ENCODE measurements at regions of chr15 and their contacts with region 1.

Region 1: GRCh38 chr15:45529613-45530012 is 7.1 kb upstream of the SLC30A4 start:
- DNase-seq: no peak
- H3K4me3 ChIP-seq: no peak overlapping the region
- H3K27ac ChIP-seq: no peak overlapping the region
- H3K4me1 ChIP-seq: no peaks in the 10 kb centered on the region
- H3K27me3 ChIP-seq: no peaks in the 10 kb centered on the region
- CTCF ChIP-seq: no peak

Region 2: GRCh38 chr15:45618813-45619212 is 89.2 kb after region 1 on chr15:
- intact Hi-C with region 1: loop called (anchors 5 kb)
- DNase-seq: no peak
- H3K4me3 ChIP-seq: no peak overlapping the region
- H3K27ac ChIP-seq: no peak overlapping the region
- H3K4me1 ChIP-seq: peaks cover 5% of the 10 kb centered on the region
- H3K27me3 ChIP-seq: no peaks in the 10 kb centered on the region
- CTCF ChIP-seq: no peak